Activated T-helper 2 cell treated with anti-CD3 and anti-CD28 coated beads, Interferon-gamma antibody, Interleukin-2, Interleukin-4, amounts not matched to agents 10 μg/mL and 5 μg/mL and 100 μg/mL, durations not matched to agents 14 hours and 24 hours and 36 hours (primary cell): ENCODE measurements at regions of chr10 and their contacts with region 1.

Region 1: DNA sequence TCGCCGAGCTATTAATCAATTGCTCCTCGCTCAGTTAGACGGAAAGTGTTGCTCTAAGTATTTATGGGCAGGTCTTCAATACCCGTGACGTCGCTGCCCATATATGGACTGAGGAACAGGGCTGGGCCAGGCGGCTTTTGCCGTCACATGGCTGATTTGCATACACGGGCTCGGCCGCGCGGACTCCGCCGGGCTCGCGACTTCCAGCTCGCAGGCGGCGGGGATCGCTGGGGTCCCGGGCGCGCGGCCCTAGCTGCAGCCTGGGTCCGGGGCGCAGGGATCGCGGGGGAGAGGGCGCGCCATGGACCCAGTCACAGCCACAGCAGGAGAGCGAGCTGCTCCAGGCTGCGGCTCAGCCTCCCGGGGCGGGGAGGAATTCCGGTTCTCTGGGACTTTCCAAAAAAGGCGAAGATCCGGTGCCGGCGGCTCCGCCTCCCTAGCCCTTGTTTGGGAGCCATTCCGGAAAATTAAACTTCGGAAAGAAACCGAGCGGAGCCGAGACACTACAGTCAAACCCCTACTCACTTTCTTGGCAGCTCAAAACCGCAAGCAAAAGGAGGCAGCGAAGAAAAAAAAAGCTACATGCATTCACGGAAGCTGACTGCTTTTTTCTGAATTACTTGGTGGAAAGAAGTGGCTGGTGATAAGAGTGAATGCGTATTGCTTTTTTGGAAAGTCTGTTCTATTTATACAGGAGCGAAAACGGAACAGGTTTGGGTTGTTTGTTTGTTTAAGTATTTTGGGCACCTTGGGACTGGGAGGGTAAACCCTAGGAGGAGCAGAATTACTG is at the start of gene EGR2:
- DNase-seq: peak; percentile 94
- H3K4me3 Mint-ChIP-seq: peak within 1 kb of the TSS; percentile 97
- H3K27ac Mint-ChIP-seq: peak within 1 kb of the TSS; percentile 100
- H3K4me1 Mint-ChIP-seq: peaks cover 45% of the 10 kb centered on the region
- H3K27me3 Mint-ChIP-seq: peaks cover 22% of the 10 kb centered on the region
- total RNA-seq, gene EGR2: 126 and 137 TPM in 2 replicates

Region 2: GRCh38 chr10:61903221-61903927 is 913.2 kb before region 1 on chr10:
- intact Hi-C with region 1: loop called (anchors 2 kb)
- DNase-seq: peak; percentile 68
- H3K4me3 Mint-ChIP-seq: peak overlapping the region; percentile 95
- H3K27ac Mint-ChIP-seq: peak overlapping the region; percentile 93
- H3K4me1 Mint-ChIP-seq: peaks cover 40% of the 10 kb centered on the region
- H3K27me3 Mint-ChIP-seq: no peaks in the 10 kb centered on the region

Region 3: GRCh38 chr10:62594093-62594520 is 222.4 kb before region 1 on chr10:
- intact Hi-C with region 1: loop called (anchors 1 kb)
- DNase-seq: peak; percentile 24
- H3K4me3 Mint-ChIP-seq: no peak overlapping the region
- H3K27ac Mint-ChIP-seq: no peak overlapping the region
- H3K4me1 Mint-ChIP-seq: peaks cover 13% of the 10 kb centered on the region
- H3K27me3 Mint-ChIP-seq: peaks cover 17% of the 10 kb centered on the region

Region 4: DNA sequence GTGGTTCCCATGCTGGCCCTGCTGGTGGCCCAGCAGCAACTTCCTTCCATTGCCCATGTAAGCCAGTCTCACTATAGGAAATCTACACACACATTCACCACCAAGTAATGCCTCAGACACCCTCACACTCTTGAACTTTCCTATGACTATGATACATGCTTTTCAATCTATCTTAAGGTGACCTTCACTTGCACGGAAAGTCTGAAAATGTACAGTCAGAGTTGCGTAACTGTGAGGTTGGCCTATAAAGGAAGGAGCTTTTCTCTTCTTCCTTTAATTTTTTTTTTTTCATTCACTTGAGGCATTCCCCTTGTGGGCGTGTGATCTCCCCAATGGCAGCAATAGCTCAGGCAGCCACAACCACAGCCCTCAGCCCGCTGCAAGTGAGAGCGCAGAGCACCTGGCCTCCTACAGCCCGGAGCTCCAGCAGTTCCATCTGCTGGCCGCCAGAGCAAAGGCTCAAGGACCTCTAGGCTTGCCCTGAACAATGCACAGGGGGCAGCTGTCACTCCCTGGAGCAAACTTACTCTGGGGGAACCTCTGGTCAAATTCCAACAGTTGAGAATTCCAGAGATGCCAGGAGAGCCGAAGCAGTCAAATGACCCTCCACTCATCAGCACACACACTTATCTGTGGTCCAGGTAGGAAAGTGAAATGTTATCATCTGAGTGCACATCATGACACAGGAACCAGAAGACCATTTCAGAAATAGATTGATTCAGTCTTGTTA is 135.2 kb before region 1 on chr10:
- intact Hi-C with region 1: loop called (anchors 1 kb)
- DNase-seq: peak; percentile 63
- H3K4me3 Mint-ChIP-seq: no peak overlapping the region
- H3K27ac Mint-ChIP-seq: peak overlapping the region; percentile 58
- H3K4me1 Mint-ChIP-seq: peaks cover 45% of the 10 kb centered on the region
- H3K27me3 Mint-ChIP-seq: no peaks in the 10 kb centered on the region

Region 5: GRCh38 chr10:62847433-62847832 is 30.9 kb after region 1 on chr10:
- intact Hi-C with region 1: no loop called
- DNase-seq: no peak
- H3K4me3 Mint-ChIP-seq: no peak overlapping the region
- H3K27ac Mint-ChIP-seq: no peak overlapping the region
- H3K4me1 Mint-ChIP-seq: peaks cover 48% of the 10 kb centered on the region
- H3K27me3 Mint-ChIP-seq: no peaks in the 10 kb centered on the region

Region 6: DNA sequence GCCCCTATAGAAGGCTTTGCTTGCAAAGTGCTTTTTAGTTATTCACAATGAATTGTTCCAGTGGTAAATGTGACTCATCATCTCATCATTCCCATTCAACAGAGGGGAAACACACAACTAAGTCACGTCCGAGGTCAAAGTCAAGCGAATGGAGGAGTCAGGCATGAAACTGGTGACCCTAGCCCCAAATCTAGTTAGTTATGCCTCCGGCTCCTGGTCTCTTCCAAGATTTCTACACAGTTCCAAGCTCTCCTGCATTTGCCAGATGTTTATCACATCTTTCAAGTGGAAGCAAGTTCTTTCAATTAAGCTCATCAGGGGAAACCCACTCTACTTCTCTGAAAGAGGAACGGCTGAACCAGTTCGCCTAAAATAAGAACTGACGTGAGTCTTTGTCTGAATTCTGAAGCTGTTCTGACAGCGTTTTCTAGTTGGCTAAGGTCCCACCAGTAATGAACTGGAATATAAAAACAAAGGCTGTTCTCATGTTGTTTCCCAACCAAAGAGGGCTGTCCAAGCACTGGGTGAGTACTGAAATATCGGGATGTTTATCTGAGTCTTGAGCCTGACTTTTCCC is 175.7 kb after region 1 on chr10:
- intact Hi-C with region 1: loop called (anchors 1 kb)
- DNase-seq: no peak
- H3K4me3 Mint-ChIP-seq: peak overlapping the region; percentile 50
- H3K27ac Mint-ChIP-seq: peak overlapping the region; percentile 89
- H3K4me1 Mint-ChIP-seq: peaks cover 66% of the 10 kb centered on the region
- H3K27me3 Mint-ChIP-seq: no peaks in the 10 kb centered on the region

Region 7: GRCh38 chr10:63133056-63133820 is 316.7 kb after region 1 on chr10 and contains the start of gene NRBF2:
- intact Hi-C with region 1: loop called (anchors 1 kb)
- DNase-seq: peak; percentile 96
- H3K4me3 Mint-ChIP-seq: peak within 1 kb of the TSS; percentile 94
- H3K27ac Mint-ChIP-seq: peak within 1 kb of the TSS; percentile 95
- H3K4me1 Mint-ChIP-seq: peaks cover 19% of the 10 kb centered on the region
- H3K27me3 Mint-ChIP-seq: peaks cover 3% of the 10 kb centered on the region
- total RNA-seq, gene NRBF2: 32.2 and 32.7 TPM in 2 replicates